HepG2 (cell line): ENCODE measurements at regions of chr9 and their contacts with region 1.

Region 1: GRCh38 chr9:121322037-121322775 is 47.8 kb downstream of the STOM start:
- DNase-seq: peak; percentile 99
- ATAC-seq: peak; percentile 79
- H3K4me3 ChIP-seq: no peak overlapping the region; a peak in 1 of 6 replicates
- H3K27ac ChIP-seq: peak overlapping the region; percentile 86
- H3K4me1 ChIP-seq: peaks cover 65% of the 10 kb centered on the region
- H3K27me3 ChIP-seq: no peaks in the 10 kb centered on the region
- CTCF ChIP-seq: no peak
- EP300 ChIP-seq: peak; percentile 81 to 97; a peak in 3 of 4 replicates
- POLR2A ChIP-seq: peak; percentile 26 to 62; a peak in 1 of 4 replicates
- RAD21 ChIP-seq: no peak

Region 2: GRCh38 chr9:121085661-121086060 is 236.5 kb before region 1 on chr9:
- CTCF ChIA-PET with region 1: no interaction called
- POLR2A ChIA-PET with region 1: no interaction called
- in situ Hi-C with region 1: no loop called
- intact Hi-C with region 1: no loop called
- DNase-seq: no peak
- ATAC-seq: no peak
- H3K4me3 ChIP-seq: no peak overlapping the region
- H3K27ac ChIP-seq: no peak overlapping the region
- H3K4me1 ChIP-seq: no peaks in the 10 kb centered on the region
- H3K27me3 ChIP-seq: no peaks in the 10 kb centered on the region
- CTCF ChIP-seq: no peak
- EP300 ChIP-seq: no peak
- POLR2A ChIP-seq: no peak
- RAD21 ChIP-seq: no peak

Region 3: GRCh38 chr9:121213136-121213806 is 108.9 kb before region 1 on chr9:
- CTCF ChIA-PET with region 1: interaction called, 10 read pairs
- POLR2A ChIA-PET with region 1: no interaction called
- in situ Hi-C with region 1: loop called (anchors 5 kb)
- intact Hi-C with region 1: loop called (anchors 1 kb)
- DNase-seq: peak; percentile 77
- ATAC-seq: peak; percentile 96
- H3K4me3 ChIP-seq: peak overlapping the region in 1 of 3 experiments; percentile 18; a peak in 1 of 6 replicates
- H3K27ac ChIP-seq: no peak overlapping the region
- H3K4me1 ChIP-seq: peaks cover 8% of the 10 kb centered on the region
- H3K27me3 ChIP-seq: no peaks in the 10 kb centered on the region
- CTCF ChIP-seq: peak; percentile 96
- EP300 ChIP-seq: no peak
- POLR2A ChIP-seq: no peak
- RAD21 ChIP-seq: peak; percentile 94

Region 4: DNA sequence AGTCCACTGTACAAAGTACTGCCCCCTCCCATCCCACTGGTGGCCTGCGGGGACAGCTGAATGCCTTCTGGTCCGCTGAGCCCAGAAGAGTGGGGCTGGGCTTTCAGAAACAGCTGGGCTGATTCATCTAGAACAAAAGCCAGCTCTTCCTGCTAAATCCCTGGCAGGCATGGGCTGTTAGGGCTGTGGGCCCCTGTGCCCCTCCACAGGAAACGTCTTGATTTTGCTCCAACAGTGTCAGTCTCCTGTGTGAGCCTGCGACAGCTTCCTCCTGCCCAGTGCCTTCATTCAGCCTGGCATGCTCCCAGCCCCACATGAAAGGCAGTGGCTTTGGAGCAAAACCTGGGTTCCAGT is 61.1 kb before region 1 on chr9:
- CTCF ChIA-PET with region 1: no interaction called
- POLR2A ChIA-PET with region 1: no interaction called
- in situ Hi-C with region 1: no loop called
- intact Hi-C with region 1: no loop called
- DNase-seq: no peak
- ATAC-seq: peak; percentile 90
- H3K4me3 ChIP-seq: peak overlapping the region in 1 of 3 experiments; percentile 9; a peak in 1 of 6 replicates
- H3K27ac ChIP-seq: no peak overlapping the region
- H3K4me1 ChIP-seq: peaks cover 17% of the 10 kb centered on the region
- H3K27me3 ChIP-seq: peaks cover 0 to 6% of the 10 kb centered on the region in 2 experiments; a peak in 2 of 5 replicates
- CTCF ChIP-seq: no peak
- EP300 ChIP-seq: no peak
- POLR2A ChIP-seq: no peak
- RAD21 ChIP-seq: no peak

Region 5: GRCh38 chr9:121286973-121287741 is 35.0 kb before region 1 on chr9:
- CTCF ChIA-PET with region 1: interaction called, 12 read pairs
- POLR2A ChIA-PET with region 1: interaction called, 8 read pairs
- in situ Hi-C with region 1: no loop called
- intact Hi-C with region 1: loop called (anchors 5 kb)
- DNase-seq: peak; percentile 86
- ATAC-seq: peak; percentile 72
- H3K4me3 ChIP-seq: peak overlapping the region; percentile 32 to 58 (median 33); a peak in 4 of 6 replicates
- H3K27ac ChIP-seq: peak overlapping the region; percentile 89
- H3K4me1 ChIP-seq: peaks cover 88% of the 10 kb centered on the region
- H3K27me3 ChIP-seq: no peaks in the 10 kb centered on the region
- CTCF ChIP-seq: peak; percentile 68
- EP300 ChIP-seq: peak in 1 of 2 experiments; percentile 90; a peak in 2 of 4 replicates
- POLR2A ChIP-seq: no peak
- RAD21 ChIP-seq: 0 out of 2 replicates have a peak, but pooled peaks have one; percentile 38

Region 6: GRCh38 chr9:121369595-121370265 is 47.5 kb after region 1 on chr9 and contains the start of gene STOM:
- CTCF ChIA-PET with region 1: interaction called, 5 read pairs
- POLR2A ChIA-PET with region 1: interaction called, 6 read pairs
- in situ Hi-C with region 1: loop called (anchors 5 kb)
- intact Hi-C with region 1: loop called (anchors 1 kb)
- DNase-seq: peak; percentile 27
- ATAC-seq: peak; percentile 44
- H3K4me3 ChIP-seq: peak within 1 kb of the TSS; percentile 62 to 88 (median 81)
- H3K27ac ChIP-seq: peak within 1 kb of the TSS; percentile 84
- H3K4me1 ChIP-seq: peaks cover 89% of the 10 kb centered on the region
- H3K27me3 ChIP-seq: no peaks in the 10 kb centered on the region
- CTCF ChIP-seq: no peak
- EP300 ChIP-seq: no peak
- POLR2A ChIP-seq: peak; percentile 96 to 97
- RAD21 ChIP-seq: peak; percentile 26; the same call in 1 of the 2 replicates
- total RNA-seq, gene STOM: 26.0 and 43.6 TPM in 2 replicates

Region 7: GRCh38 chr9:121399883-121400607 is 77.8 kb after region 1 on chr9:
- CTCF ChIA-PET with region 1: interaction called, 133 read pairs
- POLR2A ChIA-PET with region 1: interaction called, 9 read pairs
- in situ Hi-C with region 1: loop called (anchors 5 kb)
- intact Hi-C with region 1: loop called (anchors 1 kb)
- DNase-seq: peak; percentile 69
- ATAC-seq: peak; percentile 35
- H3K4me3 ChIP-seq: no peak overlapping the region
- H3K27ac ChIP-seq: no peak overlapping the region
- H3K4me1 ChIP-seq: no peaks in the 10 kb centered on the region
- H3K27me3 ChIP-seq: no peaks in the 10 kb centered on the region; a peak in 1 of 5 replicates
- CTCF ChIP-seq: peak; percentile 74
- EP300 ChIP-seq: no peak
- POLR2A ChIP-seq: no peak
- RAD21 ChIP-seq: peak; percentile 77

Region 8: GRCh38 chr9:121819428-121820231 is 497.4 kb after region 1 on chr9:
- CTCF ChIA-PET with region 1: no interaction called
- POLR2A ChIA-PET with region 1: no interaction called
- in situ Hi-C with region 1: no loop called
- intact Hi-C with region 1: no loop called
- DNase-seq: no peak
- ATAC-seq: no peak
- H3K4me3 ChIP-seq: no peak overlapping the region
- H3K27ac ChIP-seq: no peak overlapping the region
- H3K4me1 ChIP-seq: peaks cover 2% of the 10 kb centered on the region; the same call in 1 of the 2 replicates
- H3K27me3 ChIP-seq: peaks cover 1 to 64% of the 10 kb centered on the region in 2 experiments; a peak in 4 of 5 replicates
- CTCF ChIP-seq: no peak
- EP300 ChIP-seq: no peak
- POLR2A ChIP-seq: no peak
- RAD21 ChIP-seq: no peak